ENCODE measurements at regions of chr2 and their contacts with region 1.

Region 1: DNA sequence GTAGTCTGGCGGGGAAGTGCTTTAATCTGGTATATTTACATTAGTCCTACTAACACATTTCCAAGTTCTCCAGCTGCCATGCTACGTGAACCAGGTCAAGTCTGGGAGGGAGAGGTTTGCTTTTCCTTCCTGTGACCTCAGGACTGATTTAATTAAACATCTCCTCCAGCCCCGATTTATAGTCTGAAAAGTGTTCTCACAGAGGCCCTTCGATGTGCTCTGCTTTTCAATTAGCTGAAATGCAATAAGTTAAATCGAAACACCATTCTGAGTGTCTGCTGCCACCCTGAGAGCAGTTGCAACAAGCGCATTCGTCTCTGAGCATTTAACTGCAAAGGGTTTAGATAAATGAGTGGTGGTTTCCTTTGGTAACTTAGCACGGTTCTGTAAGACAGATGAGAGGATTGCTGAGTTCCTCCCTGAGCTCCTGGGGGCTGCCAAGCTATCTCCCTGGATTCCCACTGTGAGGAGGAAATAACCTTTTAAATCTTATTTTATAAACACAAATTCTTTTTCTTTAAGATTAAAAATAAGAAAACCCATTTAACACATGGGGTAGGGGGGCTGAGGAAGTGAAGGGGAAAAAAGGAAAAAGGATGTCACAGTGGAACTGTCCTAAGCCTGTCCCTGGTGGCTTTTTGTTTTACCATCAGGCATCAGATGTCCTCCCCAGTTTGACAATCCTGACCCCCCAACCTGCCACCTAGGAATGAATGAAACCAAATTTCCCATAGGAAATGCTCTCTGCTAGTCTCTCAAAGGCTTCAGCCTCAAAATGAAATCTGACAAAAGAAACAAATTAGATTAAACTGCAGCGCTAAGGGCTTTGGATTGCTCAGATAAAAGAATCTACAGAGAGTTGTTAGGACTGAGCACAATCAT is 56.5 kb upstream of the CREB1 start:
- DNase-seq: peak; percentile 30
- ATAC-seq: peak; percentile 84
- H3K4me3 ChIP-seq: no peak overlapping the region
- H3K27ac ChIP-seq: no peak overlapping the region
- H3K4me1 ChIP-seq: no peaks in the 10 kb centered on the region
- H3K27me3 ChIP-seq: no peaks in the 10 kb centered on the region
- CTCF ChIP-seq: peak; percentile 49 to 84 (median 67); a peak in 5 of 6 replicates
- EP300 ChIP-seq: no peak
- POLR2A ChIP-seq: no peak
- RAD21 ChIP-seq: peak; percentile 98

Region 2: GRCh38 chr2:206556357-206556949 is 916.8 kb before region 1 on chr2:
- CTCF ChIA-PET with region 1: interaction called, 8 read pairs
- POLR2A ChIA-PET with region 1: no interaction called
- RAD21 ChIA-PET with region 1: no interaction called
- SMC1A ChIA-PET with region 1: no interaction called
- in situ Hi-C with region 1: no loop called
- intact Hi-C with region 1: loop called (anchors 10 kb)
- DNase-seq: no peak
- ATAC-seq: peak; percentile 79
- H3K4me3 ChIP-seq: no peak overlapping the region
- H3K27ac ChIP-seq: no peak overlapping the region
- H3K4me1 ChIP-seq: no peaks in the 10 kb centered on the region
- H3K27me3 ChIP-seq: no peaks in the 10 kb centered on the region
- CTCF ChIP-seq: peak; percentile 46 to 63 (median 52); a peak in 5 of 6 replicates
- EP300 ChIP-seq: no peak
- POLR2A ChIP-seq: no peak
- RAD21 ChIP-seq: peak; percentile 61

Region 3: GRCh38 chr2:206800506-206801417 is 672.5 kb before region 1 on chr2:
- CTCF ChIA-PET with region 1: interaction called, 44 read pairs
- POLR2A ChIA-PET with region 1: interaction called, 6 read pairs
- RAD21 ChIA-PET with region 1: interaction called, 34 read pairs
- SMC1A ChIA-PET with region 1: interaction called, 24 read pairs
- in situ Hi-C with region 1: loop called (anchors 5 kb)
- intact Hi-C with region 1: loop called (anchors 1 kb)
- DNase-seq: no peak
- ATAC-seq: peak; percentile 85
- H3K4me3 ChIP-seq: no peak overlapping the region
- H3K27ac ChIP-seq: no peak overlapping the region
- H3K4me1 ChIP-seq: peaks cover 3% of the 10 kb centered on the region
- H3K27me3 ChIP-seq: no peaks in the 10 kb centered on the region
- CTCF ChIP-seq: peak; percentile 55 to 80 (median 71); a peak in 5 of 6 replicates
- EP300 ChIP-seq: no peak
- POLR2A ChIP-seq: no peak
- RAD21 ChIP-seq: peak; percentile 90

Region 4: DNA sequence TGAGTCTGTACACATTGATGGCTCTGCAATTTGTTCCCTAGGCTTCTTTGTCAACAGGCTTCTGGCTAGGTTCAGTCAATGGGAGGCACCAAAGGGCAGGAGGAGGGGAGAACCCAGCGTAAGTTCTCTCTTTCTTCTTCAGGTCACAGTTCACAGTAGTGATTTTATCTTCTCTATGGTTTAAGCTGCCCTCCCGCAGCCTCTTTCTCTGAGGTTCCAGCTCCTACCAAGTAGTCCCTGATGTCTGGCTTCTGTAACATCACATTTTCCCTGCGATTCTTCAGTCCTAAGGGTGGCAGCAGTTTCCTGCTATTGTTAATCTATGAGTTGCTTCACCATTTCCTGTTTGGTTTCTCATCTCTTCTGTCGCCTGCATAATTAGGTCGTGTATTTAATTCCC is 426.6 kb before region 1 on chr2:
- CTCF ChIA-PET with region 1: interaction called, 9 read pairs
- POLR2A ChIA-PET with region 1: no interaction called
- RAD21 ChIA-PET with region 1: no interaction called
- SMC1A ChIA-PET with region 1: interaction called, 3 read pairs
- in situ Hi-C with region 1: no loop called
- intact Hi-C with region 1: loop called (anchors 2 kb)
- DNase-seq: no peak
- ATAC-seq: peak; percentile 40; the same call in 1 of the 3 replicates
- H3K4me3 ChIP-seq: no peak overlapping the region
- H3K27ac ChIP-seq: no peak overlapping the region
- H3K4me1 ChIP-seq: no peaks in the 10 kb centered on the region
- H3K27me3 ChIP-seq: no peaks in the 10 kb centered on the region
- CTCF ChIP-seq: peak in 2 of 3 experiments; percentile 37 to 38; a peak in 4 of 6 replicates
- EP300 ChIP-seq: no peak
- POLR2A ChIP-seq: no peak
- RAD21 ChIP-seq: peak; percentile 65

Region 5: DNA sequence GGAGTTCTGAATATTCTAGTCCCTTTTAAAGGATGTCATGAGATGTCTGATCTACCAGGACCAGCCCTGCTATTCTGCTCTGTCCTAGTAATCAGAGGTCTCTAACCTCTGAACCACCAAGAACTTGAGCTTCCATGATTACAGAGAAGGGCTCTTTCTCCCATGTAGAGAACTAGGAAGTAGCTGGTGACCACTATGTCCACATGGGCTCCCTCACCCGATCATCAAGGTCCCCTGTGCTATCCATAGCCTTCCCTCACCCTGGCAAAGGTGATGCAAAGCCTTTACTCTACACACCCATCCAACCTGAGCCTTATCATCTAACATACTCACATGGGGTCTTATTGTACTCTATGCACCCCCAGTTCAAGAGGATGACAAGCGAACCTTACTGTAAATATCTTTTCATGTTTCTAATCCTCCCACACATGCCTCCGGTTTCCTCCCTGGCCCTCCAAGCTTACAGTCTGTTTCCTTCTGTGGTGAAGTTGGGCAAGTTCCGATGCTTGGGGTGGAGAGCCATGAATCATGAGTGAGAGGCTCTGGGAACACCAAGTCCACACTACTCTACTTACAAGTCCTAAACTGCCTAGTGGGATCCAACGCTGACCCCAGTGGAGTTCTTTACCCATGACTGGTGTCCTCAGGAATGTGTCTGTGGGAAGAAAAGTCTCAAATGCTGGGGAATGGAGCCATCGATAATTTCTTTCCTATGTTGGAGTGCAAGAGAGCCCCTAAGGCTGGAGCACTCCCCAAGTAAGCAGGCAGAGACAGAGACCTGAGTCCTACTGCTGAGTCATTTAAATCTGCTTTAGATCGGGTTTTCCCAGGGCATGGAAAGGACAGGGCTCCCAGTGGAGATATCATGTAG is 234.2 kb before region 1 on chr2:
- CTCF ChIA-PET with region 1: interaction called, 8 read pairs
- POLR2A ChIA-PET with region 1: no interaction called
- RAD21 ChIA-PET with region 1: no interaction called
- SMC1A ChIA-PET with region 1: interaction called, 6 read pairs
- in situ Hi-C with region 1: no loop called
- intact Hi-C with region 1: loop called (anchors 2 kb)
- DNase-seq: no peak
- ATAC-seq: no peak
- H3K4me3 ChIP-seq: no peak overlapping the region
- H3K27ac ChIP-seq: no peak overlapping the region
- H3K4me1 ChIP-seq: peaks cover 10% of the 10 kb centered on the region
- H3K27me3 ChIP-seq: no peaks in the 10 kb centered on the region
- CTCF ChIP-seq: no peak
- EP300 ChIP-seq: no peak
- POLR2A ChIP-seq: no peak
- RAD21 ChIP-seq: no peak

Measured in GM12878 (cell line).